Activated CD4-positive, alpha-beta T cell treated with anti-CD3 and anti-CD28 coated beads, Interleukin-2, amount 10 ng/mL, durations not matched to agents 24 days and 14 days (primary cell): ENCODE measurements at regions of chr4 and their contacts with region 1.

Region 1: GRCh38 chr4:152255437-152256011 is 280.4 kb downstream of the FBXW7 start:
- DNase-seq: peak; percentile 90
- H3K4me3 Mint-ChIP-seq: no peak overlapping the region
- H3K27ac Mint-ChIP-seq: no peak overlapping the region
- H3K4me1 Mint-ChIP-seq: peaks cover 14% of the 10 kb centered on the region
- H3K27me3 Mint-ChIP-seq: no peaks in the 10 kb centered on the region

Region 2: GRCh38 chr4:151887031-151887815 is 368.3 kb before region 1 on chr4:
- intact Hi-C with region 1: loop called (anchors 5 kb)
- DNase-seq: no peak
- H3K4me3 Mint-ChIP-seq: no peak overlapping the region
- H3K27ac Mint-ChIP-seq: peak overlapping the region; percentile 57
- H3K4me1 Mint-ChIP-seq: peaks cover 28% of the 10 kb centered on the region
- H3K27me3 Mint-ChIP-seq: no peaks in the 10 kb centered on the region

Region 3: DNA sequence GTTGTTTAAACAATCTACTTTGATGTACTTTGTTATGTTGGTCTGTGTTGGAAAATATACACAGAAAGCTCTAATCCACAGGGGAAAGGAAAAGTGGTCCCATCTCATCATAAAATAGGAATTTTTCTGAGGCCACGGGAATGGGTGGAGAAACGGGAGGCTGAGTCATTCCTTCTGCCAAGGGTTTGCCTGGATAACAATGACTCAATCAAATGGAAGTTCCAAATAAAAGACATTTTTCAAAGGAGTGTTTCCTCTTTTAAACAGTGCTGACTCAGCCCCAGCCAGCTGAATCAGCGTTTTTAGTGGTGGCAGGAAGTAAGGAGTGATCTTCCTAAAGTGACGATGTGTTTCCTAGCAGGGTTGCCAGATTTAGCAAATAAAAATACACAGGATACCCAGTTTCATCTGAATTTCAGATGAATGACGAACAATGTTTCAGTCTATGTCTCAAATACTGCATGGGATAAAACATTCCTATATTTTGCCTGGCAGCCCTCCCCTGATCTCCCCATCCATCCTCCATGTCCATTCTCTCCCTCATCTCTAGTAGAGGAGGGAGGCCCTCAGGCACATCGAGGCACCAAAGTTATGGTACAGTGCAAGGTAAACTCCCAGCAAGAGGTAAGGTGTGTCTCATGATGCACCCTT is 149.3 kb before region 1 on chr4:
- intact Hi-C with region 1: loop called (anchors 10 kb)
- DNase-seq: peak; percentile 61
- H3K4me3 Mint-ChIP-seq: no peak overlapping the region
- H3K27ac Mint-ChIP-seq: no peak overlapping the region
- H3K4me1 Mint-ChIP-seq: peaks cover 50% of the 10 kb centered on the region
- H3K27me3 Mint-ChIP-seq: no peaks in the 10 kb centered on the region

Region 4: DNA sequence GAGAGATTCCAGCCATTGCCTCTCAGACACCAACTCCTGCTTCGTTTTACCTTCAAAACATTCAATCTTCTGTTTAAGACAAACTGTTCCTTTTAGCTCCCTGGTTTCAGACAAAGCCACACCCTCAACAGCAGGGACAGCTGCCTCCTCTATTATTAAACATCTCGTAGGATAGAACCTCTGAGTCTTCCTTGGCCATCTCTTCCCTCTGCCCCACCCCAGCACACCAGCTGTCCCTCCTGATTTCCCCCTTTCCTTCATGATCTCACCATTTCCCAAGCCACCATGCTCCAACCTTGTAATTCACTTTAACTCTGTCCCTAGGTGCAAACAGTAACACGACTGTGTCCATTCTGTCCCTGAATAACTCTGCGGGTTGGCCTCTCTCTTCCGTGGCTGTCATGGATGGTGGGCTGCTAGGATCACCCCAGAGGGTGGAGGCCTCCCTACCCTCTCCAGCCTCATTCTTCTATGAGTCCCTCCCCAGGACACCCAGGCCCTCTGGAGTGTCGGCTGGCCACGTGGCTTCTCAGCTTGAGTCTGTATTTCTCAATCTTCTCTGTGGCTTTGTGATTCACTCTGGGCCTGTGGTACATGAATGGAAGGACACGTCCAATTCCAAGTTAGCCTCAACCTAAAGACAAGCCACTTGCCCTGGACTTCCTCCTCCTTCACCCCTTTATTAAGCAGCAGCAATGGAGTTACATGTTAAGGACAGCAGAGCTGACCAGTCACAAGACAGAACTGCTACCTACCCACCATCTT is 69.6 kb before region 1 on chr4:
- intact Hi-C with region 1: loop called (anchors 2 kb)
- DNase-seq: no peak
- H3K4me3 Mint-ChIP-seq: no peak overlapping the region
- H3K27ac Mint-ChIP-seq: no peak overlapping the region
- H3K4me1 Mint-ChIP-seq: peaks cover 31% of the 10 kb centered on the region
- H3K27me3 Mint-ChIP-seq: no peaks in the 10 kb centered on the region

Region 5: GRCh38 chr4:152220201-152220666 is 35.3 kb before region 1 on chr4:
- intact Hi-C with region 1: loop called (anchors 1 kb)
- DNase-seq: no peak
- H3K4me3 Mint-ChIP-seq: peak overlapping the region; percentile 7
- H3K27ac Mint-ChIP-seq: no peak overlapping the region
- H3K4me1 Mint-ChIP-seq: peaks cover 12% of the 10 kb centered on the region
- H3K27me3 Mint-ChIP-seq: no peaks in the 10 kb centered on the region